MCF 10A (cell line): ENCODE measurements at regions of chr3 and their contacts with region 1.

Region 1: DNA sequence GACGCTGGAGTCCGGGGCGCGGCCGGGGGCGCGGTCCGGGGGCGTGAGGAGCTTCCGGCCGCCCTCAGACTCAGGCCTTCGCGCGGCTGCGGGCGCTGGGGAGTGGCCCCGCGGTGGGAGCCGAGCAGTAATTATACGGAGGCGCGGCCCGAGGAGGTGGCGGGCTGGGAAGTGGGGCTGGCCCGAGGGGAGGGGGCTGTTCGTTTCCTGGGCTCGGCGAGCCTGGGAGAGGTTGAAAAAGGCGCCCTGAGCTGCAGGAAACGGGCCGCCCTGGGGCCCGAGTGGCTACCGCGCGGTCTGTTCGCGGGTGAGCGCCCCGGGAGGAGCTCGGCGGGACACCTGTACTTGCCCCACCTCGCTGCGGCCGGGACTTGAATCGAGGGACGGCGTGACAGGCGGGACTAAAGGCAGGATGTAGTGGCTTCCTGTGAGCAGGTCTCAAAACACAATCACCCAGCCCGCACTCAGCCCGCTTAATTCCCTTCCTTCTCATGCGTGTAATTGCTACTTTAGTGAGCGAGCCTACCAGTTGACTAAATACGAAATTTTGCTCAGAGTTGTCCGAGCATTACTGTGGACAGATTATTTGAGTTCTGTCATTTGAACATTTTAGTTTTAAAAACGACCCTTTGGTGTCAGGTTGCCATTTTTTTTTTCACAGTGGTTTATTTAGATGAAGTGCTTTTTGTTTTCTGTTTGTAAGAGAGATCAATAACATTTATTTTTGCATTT is 860 bp downstream of the RASA2 start:
- DNase-seq: peak; percentile 74
- H3K4me3 Mint-ChIP-seq: peak overlapping the region; percentile 88
- H3K27ac Mint-ChIP-seq: peak overlapping the region; percentile 85
- H3K4me1 Mint-ChIP-seq: peaks cover 52% of the 10 kb centered on the region
- H3K27me3 Mint-ChIP-seq: no peaks in the 10 kb centered on the region
- CTCF ChIP-seq: no peak

Region 2: DNA sequence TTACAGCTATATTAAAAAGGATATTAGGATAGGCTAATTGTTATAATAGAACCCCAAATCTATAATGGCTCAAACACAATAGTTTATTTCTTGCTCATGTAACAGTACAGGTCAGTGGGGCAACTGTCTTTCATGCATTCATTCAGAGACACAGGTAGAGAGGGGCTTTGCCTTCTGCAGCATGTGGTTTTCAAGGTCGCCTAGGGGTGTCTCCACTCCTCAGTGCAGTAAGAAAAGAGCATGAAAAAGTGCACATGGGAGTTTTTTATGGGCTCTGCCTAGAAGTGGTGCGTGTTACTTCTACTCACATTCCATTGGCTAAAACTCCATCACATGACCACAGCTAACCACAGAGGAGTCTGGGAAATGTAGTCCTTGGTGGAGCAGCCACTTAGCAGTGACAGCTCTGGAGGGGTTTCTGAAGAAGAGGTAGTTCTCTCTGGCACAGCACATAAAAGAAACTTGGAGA is 117.6 kb before region 1 on chr3:
- CTCF ChIA-PET with region 1: no interaction called
- POLR2A ChIA-PET with region 1: interaction called, 10 read pairs
- intact Hi-C with region 1: no loop called
- DNase-seq: peak; percentile 93
- H3K4me3 Mint-ChIP-seq: peak overlapping the region; percentile 73
- H3K27ac Mint-ChIP-seq: peak overlapping the region; percentile 98
- H3K4me1 Mint-ChIP-seq: peaks cover 56% of the 10 kb centered on the region
- H3K27me3 Mint-ChIP-seq: no peaks in the 10 kb centered on the region
- CTCF ChIP-seq: no peak

Region 3: DNA sequence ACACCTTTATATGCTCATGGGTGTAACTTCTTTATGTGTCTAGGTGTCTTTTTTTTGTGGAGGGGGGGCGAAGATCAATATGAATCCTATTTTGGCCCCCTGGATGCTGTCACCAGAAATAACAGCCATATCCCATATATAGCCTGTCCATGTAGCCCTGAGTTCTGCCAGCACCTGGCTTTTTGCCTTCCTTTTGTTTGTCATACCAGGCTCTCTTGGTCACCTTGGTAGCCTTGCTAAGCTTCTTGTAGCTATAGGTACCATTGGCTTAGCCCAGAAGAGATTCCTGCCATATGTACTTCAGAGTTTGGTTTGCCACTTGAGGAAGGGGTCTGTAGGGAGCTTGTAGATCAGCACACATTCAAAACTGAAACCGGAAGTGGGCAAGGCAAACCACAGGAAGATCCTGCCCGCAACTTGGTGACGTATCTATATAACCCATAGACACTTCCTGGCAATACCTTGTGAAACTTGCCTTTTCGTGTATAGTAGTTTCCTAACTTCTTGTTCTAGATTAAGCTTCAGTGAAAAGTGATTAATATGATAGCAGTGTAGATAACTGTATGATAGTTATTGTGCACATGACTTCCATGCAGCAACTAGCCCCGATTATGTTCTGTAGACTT is 11.0 kb after region 1 on chr3:
- CTCF ChIA-PET with region 1: no interaction called
- POLR2A ChIA-PET with region 1: interaction called, 13 read pairs
- intact Hi-C with region 1: no loop called
- DNase-seq: no peak
- H3K4me3 Mint-ChIP-seq: no peak overlapping the region
- H3K27ac Mint-ChIP-seq: no peak overlapping the region
- H3K4me1 Mint-ChIP-seq: peaks cover 12% of the 10 kb centered on the region
- H3K27me3 Mint-ChIP-seq: no peaks in the 10 kb centered on the region
- CTCF ChIP-seq: no peak

Region 4: DNA sequence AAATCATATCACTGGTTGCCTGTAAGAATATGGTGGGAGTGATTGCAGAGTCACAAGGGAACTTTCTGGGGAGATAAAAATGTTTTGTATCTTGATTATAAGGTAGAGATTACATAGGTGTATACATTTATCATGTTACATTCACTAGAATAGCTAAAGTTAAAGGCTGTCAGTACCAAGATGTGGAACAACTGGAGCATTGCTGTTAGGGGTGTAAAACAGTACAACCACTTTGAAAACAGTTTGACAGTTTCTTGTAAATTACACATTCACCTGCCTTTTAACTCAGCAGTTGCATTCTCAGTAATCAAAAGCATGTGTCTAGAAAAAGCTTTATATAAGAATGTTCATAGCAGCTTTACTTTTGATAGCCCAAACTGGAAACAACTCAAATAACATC is 26.7 kb after region 1 on chr3:
- CTCF ChIA-PET with region 1: interaction called, 5 read pairs
- POLR2A ChIA-PET with region 1: interaction called, 16 read pairs
- intact Hi-C with region 1: no loop called
- DNase-seq: no peak
- H3K4me3 Mint-ChIP-seq: no peak overlapping the region
- H3K27ac Mint-ChIP-seq: no peak overlapping the region
- H3K4me1 Mint-ChIP-seq: peaks cover 18% of the 10 kb centered on the region
- H3K27me3 Mint-ChIP-seq: no peaks in the 10 kb centered on the region
- CTCF ChIP-seq: no peak

Region 5: DNA sequence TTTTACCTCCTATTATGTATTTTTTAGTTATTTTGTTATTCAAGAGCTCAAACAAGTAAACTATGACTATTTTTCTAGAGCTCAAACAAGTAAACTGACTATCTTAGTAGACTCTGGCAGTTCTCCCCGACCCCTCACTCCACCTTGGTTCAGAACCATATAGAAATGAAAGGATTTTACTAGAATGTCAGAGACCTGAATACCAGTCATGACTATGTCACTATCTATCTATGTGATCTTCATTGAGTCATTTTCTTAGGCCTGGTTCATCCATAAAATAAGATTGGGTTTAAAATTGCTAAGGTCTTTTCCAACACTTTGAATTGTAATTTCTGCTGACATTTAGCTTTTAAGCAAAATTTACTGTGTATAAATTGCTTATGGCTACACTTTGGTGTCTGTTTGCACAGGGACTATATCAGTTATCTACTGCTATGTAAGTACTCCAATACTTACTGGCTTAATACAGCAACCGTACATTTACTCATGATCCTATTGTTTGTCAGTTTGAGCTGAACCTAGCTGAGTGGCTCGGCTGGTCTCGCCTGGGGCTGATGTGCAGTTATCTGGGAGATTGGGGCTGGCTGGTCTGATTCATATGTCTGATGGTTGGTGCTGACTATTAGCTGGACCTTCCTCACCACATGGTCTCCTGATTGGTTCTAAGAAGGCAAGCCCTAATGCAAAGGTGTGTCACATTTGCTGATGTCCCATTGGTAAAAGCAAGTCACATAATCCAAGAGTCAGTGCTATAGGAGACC is 36.1 kb after region 1 on chr3:
- CTCF ChIA-PET with region 1: no interaction called
- POLR2A ChIA-PET with region 1: interaction called, 15 read pairs
- intact Hi-C with region 1: no loop called
- DNase-seq: no peak
- H3K4me3 Mint-ChIP-seq: no peak overlapping the region
- H3K27ac Mint-ChIP-seq: no peak overlapping the region
- H3K4me1 Mint-ChIP-seq: peaks cover 10% of the 10 kb centered on the region
- H3K27me3 Mint-ChIP-seq: no peaks in the 10 kb centered on the region
- CTCF ChIP-seq: no peak

Region 6: DNA sequence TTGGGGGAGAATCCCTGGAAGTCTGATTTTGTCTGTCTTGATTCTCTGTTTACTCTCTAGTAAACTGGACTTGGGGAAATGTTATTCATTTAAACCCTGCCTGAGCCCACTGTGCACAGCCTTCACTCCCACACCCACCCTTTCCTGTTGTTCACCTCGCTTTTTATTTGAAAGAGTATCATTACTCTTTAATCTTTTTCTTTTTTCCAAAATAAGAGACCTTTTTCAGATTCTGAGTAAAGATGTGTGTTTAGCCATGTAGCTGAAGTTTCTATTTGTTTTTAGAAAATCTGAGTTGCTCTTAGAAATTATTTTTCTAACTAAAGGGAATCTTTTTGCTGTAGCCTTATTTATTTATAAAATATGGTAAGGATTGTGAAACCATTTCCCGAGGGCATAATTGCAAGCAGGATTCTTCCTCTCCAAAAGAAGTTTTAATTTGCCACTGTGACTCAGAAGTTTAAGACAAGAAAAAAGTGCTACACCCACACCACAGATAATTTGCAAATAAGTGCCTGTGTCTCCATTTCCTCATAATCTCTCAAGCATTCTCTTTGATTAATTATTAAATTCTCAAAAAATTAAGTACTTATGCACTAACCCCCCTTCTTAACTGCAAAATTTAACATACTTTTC is 42.6 kb after region 1 on chr3:
- CTCF ChIA-PET with region 1: interaction called, 4 read pairs
- POLR2A ChIA-PET with region 1: interaction called, 23 read pairs
- intact Hi-C with region 1: loop called (anchors 5 kb)
- DNase-seq: peak; percentile 88
- H3K4me3 Mint-ChIP-seq: peak overlapping the region; percentile 41
- H3K27ac Mint-ChIP-seq: peak overlapping the region; percentile 96
- H3K4me1 Mint-ChIP-seq: peaks cover 39% of the 10 kb centered on the region
- H3K27me3 Mint-ChIP-seq: no peaks in the 10 kb centered on the region
- CTCF ChIP-seq: no peak

Region 7: GRCh38 chr3:141561426-141562034 is 73.8 kb after region 1 on chr3:
- CTCF ChIA-PET with region 1: interaction called, 4 read pairs
- POLR2A ChIA-PET with region 1: interaction called, 14 read pairs
- intact Hi-C with region 1: no loop called
- DNase-seq: peak; percentile 64
- H3K4me3 Mint-ChIP-seq: no peak overlapping the region
- H3K27ac Mint-ChIP-seq: no peak overlapping the region
- H3K4me1 Mint-ChIP-seq: no peaks in the 10 kb centered on the region
- H3K27me3 Mint-ChIP-seq: no peaks in the 10 kb centered on the region
- CTCF ChIP-seq: peak; percentile 88